ENCODE measurements at regions of chr16 and their contacts with region 1.

Region 1: GRCh38 chr16:70737377-70738082 is 51.7 kb upstream of the MTSS2 start:
- DNase-seq: peak in 1 of 10 donors; percentile 51
- H3K4me3 ChIP-seq: no peak overlapping the region
- H3K27ac ChIP-seq: peak overlapping the region in 50 of 59 donors; percentile 1 to 84 (median 67)
- H3K27me3 ChIP-seq: no peaks in the 10 kb centered on the region
- CTCF ChIP-seq: no peak

Region 2: GRCh38 chr16:70679666-70680494 is 57.6 kb before region 1 on chr16:
- intact Hi-C with region 1: loop called in 1 of 2 experiments (anchors 2 kb)
- DNase-seq: no peak
- H3K4me3 ChIP-seq: peak overlapping the region in 54 of 59 donors; percentile 11 to 89 (median 50)
- H3K27ac ChIP-seq: peak overlapping the region; percentile 48 to 98 (median 94)
- H3K27me3 ChIP-seq: no peaks in the 10 kb centered on the region
- CTCF ChIP-seq: peak in 51 of 56 donors; percentile 24 to 93 (median 64)